CD4-positive, alpha-beta memory T cell (primary cell): ENCODE measurements at regions of chr7 and their contacts with region 1.

Region 1: DNA sequence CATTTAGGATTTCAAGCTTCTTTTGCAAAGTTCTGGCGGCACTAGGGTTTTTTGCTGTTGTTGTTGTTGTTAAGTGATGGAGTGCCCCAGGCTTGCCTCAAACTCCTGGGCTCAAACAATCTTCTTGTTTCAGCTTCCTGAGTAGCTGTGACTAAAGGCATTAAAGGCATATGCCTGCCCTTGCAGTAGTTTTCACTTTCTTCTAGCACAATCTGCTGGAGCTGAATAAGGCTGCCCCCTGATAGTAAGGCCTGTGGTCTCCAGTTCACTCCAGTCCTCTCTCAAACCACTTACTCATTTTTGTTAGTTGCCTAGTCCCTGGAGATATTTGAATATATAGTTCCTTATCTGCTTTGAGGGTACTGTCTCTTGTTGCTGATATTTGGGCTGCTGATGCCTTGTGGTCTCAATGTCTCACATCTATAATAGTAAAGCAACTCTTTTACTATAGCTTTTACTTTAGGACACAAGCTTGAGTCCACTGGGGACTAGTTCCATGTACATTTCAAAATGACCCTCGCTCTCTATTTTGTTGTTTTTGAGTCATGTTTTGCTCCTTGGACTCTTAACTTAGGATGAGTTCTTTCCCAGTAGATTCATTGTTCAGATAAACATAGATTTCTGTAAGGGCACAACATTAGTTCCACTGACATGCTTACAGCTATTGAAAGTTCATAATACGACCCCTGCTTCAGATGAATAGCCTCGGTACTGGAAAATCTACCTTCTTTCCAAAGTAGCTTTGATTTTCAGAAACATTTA is 25.5 kb downstream of the PHF14 start:
- DNase-seq: no peak
- H3K4me3 ChIP-seq: no peak overlapping the region
- H3K4me3 Mint-ChIP-seq: peak overlapping the region in 1 of 8 donors; percentile 9
- H3K27ac ChIP-seq: no peak overlapping the region
- H3K27ac Mint-ChIP-seq: peak overlapping the region in 6 of 7 donors; percentile 5 to 58 (median 16)
- H3K4me1 ChIP-seq: peaks cover 7% of the 10 kb centered on the region
- H3K4me1 Mint-ChIP-seq: peaks cover 34 to 50% (median 44%) of the 10 kb centered on the region in 4 donors
- H3K27me3 ChIP-seq: no peaks in the 10 kb centered on the region
- H3K27me3 Mint-ChIP-seq: no peaks in the 10 kb centered on the region

Region 2: GRCh38 chr7:10939911-10940703 is 59.1 kb before region 1 on chr7:
- CTCF ChIA-PET with region 1: no interaction called
- POLR2A ChIA-PET with region 1: interaction called, 10 read pairs
- intact Hi-C with region 1: no loop called
- DNase-seq: peak; percentile 91 to 94 (median 93)
- H3K4me3 ChIP-seq: peak overlapping the region; percentile 82 to 90
- H3K4me3 Mint-ChIP-seq: no peak overlapping the region
- H3K27ac ChIP-seq: peak overlapping the region; percentile 87
- H3K27ac Mint-ChIP-seq: no peak overlapping the region
- H3K4me1 ChIP-seq: peaks cover 27% of the 10 kb centered on the region
- H3K4me1 Mint-ChIP-seq: peaks cover 17 to 34% (median 18%) of the 10 kb centered on the region in 4 donors
- H3K27me3 ChIP-seq: no peaks in the 10 kb centered on the region
- H3K27me3 Mint-ChIP-seq: no peaks in the 10 kb centered on the region

Region 3: GRCh38 chr7:10981317-10981716 is 17.9 kb before region 1 on chr7:
- CTCF ChIA-PET with region 1: no interaction called
- POLR2A ChIA-PET with region 1: no interaction called
- intact Hi-C with region 1: loop called (anchors 2 kb)
- DNase-seq: no peak
- H3K4me3 ChIP-seq: no peak overlapping the region
- H3K4me3 Mint-ChIP-seq: no peak overlapping the region
- H3K27ac ChIP-seq: no peak overlapping the region
- H3K27ac Mint-ChIP-seq: peak overlapping the region in 1 of 7 donors; percentile 41
- H3K4me1 ChIP-seq: peaks cover 18% of the 10 kb centered on the region
- H3K4me1 Mint-ChIP-seq: peaks cover 29 to 49% (median 37%) of the 10 kb centered on the region in 4 donors
- H3K27me3 ChIP-seq: no peaks in the 10 kb centered on the region
- H3K27me3 Mint-ChIP-seq: no peaks in the 10 kb centered on the region